Activated naive CD4-positive, alpha-beta T cell treated with anti-CD3 and anti-CD28 coated beads for 36 hours (primary cell): ENCODE measurements at regions of chr5 and their contacts with region 1.

Region 1: GRCh38 chr5:94524841-94525697 is 93.3 kb downstream of the KIAA0825 start:
- DNase-seq: peak; percentile 22
- H3K4me3 Mint-ChIP-seq: no peak overlapping the region
- H3K27ac Mint-ChIP-seq: no peak overlapping the region
- H3K4me1 Mint-ChIP-seq: no peaks in the 10 kb centered on the region
- H3K27me3 Mint-ChIP-seq: no peaks in the 10 kb centered on the region

Region 2: DNA sequence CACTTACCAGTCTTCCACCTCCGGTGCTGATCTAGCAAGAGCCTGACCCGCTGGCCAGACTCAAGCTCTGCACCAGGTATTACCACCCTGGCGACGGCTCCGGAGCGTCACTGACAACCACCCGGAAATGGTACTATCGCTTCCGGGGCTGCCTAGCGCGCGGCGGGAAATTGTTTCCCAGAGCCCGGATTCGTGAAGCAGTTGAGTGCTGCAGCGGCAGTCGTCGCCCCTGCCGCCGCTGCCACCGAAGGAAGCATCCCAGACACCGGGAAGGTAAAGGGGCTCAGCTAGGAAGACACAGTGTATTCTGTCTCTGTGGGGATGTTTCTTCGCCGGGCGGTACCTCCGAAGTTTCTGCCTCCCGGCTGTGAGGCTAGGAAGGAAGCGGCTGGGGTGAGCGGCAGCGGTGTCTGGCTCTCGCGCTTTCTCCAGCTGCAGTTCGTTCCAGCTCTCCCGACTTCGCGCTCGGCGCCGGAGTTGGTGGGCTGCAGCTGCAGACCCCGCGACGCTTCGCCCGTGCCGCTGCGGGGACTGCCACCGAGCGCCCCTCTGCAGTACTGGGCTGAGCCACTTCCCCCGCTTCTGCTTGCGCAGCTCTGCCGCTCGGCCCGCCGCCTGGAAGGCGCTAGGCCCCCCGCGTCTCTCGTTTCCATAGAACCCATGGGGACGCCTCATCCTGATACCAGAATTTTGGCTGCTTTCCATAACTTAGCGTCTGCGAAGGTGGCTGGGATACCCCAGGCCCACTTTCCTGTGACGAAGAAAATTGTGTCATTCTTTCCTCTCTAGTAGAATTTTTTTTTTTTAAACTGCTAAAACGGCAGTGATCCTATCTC is 93.6 kb after region 1 on chr5 and contains the starts of genes KIAA0825 and SLF1:
- CTCF ChIA-PET with region 1: interaction called, 3 read pairs
- intact Hi-C with region 1: loop called (anchors 2 kb)
- DNase-seq: peak; percentile 93
- H3K4me3 Mint-ChIP-seq: peak within 1 kb of the TSS; percentile 96
- H3K27ac Mint-ChIP-seq: peak within 1 kb of the TSS; percentile 93
- H3K4me1 Mint-ChIP-seq: peaks cover 34% of the 10 kb centered on the region
- H3K27me3 Mint-ChIP-seq: no peaks in the 10 kb centered on the region
- total RNA-seq, gene KIAA0825: 0.07 to 0.24 TPM
- total RNA-seq, gene SLF1: 12.4 to 12.8 TPM

Region 3: GRCh38 chr5:94693043-94693822 is 168.2 kb after region 1 on chr5:
- CTCF ChIA-PET with region 1: no interaction called
- intact Hi-C with region 1: loop called (anchors 1 kb)
- DNase-seq: no peak
- H3K4me3 Mint-ChIP-seq: no peak overlapping the region
- H3K27ac Mint-ChIP-seq: no peak overlapping the region
- H3K4me1 Mint-ChIP-seq: no peaks in the 10 kb centered on the region
- H3K27me3 Mint-ChIP-seq: no peaks in the 10 kb centered on the region

Region 4: GRCh38 chr5:94784536-94785510 is 259.8 kb after region 1 on chr5:
- CTCF ChIA-PET with region 1: no interaction called
- intact Hi-C with region 1: loop called (anchors 5 kb)
- DNase-seq: no peak
- H3K4me3 Mint-ChIP-seq: no peak overlapping the region
- H3K27ac Mint-ChIP-seq: no peak overlapping the region
- H3K4me1 Mint-ChIP-seq: no peaks in the 10 kb centered on the region
- H3K27me3 Mint-ChIP-seq: no peaks in the 10 kb centered on the region

Region 5: DNA sequence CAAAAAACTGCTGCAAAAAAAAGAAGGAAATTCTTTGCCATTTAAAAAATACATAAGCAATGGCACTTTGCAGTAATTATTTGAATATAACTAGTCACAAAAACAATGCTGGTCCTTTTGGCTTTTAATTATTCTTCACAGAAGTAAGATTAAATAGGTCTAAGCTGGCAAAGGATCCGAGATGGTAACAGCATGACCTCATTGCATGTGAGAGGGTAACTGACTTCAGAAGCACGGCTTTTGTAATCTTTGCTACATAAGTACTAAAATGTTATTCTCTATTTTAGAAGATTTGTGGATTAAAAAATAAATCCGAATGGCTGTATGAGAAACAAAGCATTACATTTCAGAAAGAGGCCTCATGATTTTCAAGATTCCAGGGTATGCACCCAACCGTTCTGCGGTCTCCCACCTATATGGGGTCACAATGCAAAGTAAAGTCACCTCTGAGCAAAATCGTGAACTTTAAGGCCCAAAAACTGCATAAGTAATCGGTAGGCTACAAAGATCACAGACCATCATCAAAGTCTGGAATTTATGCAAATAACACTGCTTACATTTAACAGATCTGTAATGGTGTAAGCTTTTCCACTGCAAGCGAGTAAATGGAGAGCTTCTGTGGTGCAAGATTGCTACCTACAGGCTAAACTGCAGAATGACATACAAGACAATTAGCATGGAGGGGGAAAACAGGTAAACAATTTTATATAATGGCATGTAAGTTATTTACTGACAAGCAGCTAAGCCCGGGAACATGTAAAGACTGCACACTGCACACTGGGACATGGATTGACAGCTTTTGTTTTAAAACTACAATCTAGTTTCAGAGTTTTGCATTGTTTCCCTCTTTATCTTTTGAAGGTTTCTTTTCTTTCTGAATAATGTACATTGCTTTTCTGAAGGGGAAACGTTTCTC is 325.0 kb after region 1 on chr5:
- CTCF ChIA-PET with region 1: interaction called, 4 read pairs
- intact Hi-C with region 1: loop called (anchors 1 kb)
- DNase-seq: peak; percentile 40
- H3K4me3 Mint-ChIP-seq: no peak overlapping the region
- H3K27ac Mint-ChIP-seq: no peak overlapping the region
- H3K4me1 Mint-ChIP-seq: peaks cover 3% of the 10 kb centered on the region
- H3K27me3 Mint-ChIP-seq: peaks cover 6% of the 10 kb centered on the region

Region 6: DNA sequence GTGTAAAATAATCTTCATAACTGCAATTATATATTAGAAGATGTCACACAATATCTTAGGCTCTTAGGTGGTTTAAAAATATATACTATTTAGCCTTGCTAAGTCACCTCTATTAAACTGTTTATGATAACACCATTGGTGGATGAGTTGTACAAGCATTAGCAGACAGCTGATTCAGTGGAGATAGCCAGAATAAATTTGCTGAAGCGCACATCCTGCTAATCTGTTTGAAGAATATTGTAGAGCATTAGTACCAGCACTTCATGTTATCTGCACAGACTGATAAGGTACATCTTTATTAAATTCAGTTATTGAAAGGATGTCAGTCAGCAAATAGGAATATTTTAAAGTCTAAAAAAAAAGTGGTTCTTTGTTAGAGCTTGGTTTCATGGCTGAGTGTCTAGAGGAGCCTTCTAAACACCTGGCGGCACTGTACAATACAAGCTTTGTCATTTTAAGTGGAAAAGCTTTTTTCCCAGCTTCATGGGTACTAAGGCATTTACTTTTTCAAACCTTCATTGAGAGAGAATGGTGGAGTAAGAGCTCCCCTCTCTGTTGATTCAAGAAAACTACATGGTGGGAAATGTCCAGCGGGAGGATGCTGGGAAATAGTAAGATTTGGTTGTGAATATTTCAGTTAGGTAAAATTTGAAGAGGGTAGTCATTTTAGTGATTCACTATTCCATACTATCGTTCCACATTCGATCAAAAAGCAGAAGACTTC is 368.5 kb after region 1 on chr5:
- CTCF ChIA-PET with region 1: no interaction called
- intact Hi-C with region 1: no loop called
- DNase-seq: no peak
- H3K4me3 Mint-ChIP-seq: no peak overlapping the region
- H3K27ac Mint-ChIP-seq: no peak overlapping the region
- H3K4me1 Mint-ChIP-seq: no peaks in the 10 kb centered on the region
- H3K27me3 Mint-ChIP-seq: peaks cover 4% of the 10 kb centered on the region

Region 7: GRCh38 chr5:94908889-94909480 is 383.9 kb after region 1 on chr5:
- CTCF ChIA-PET with region 1: interaction called, 3 read pairs
- intact Hi-C with region 1: loop called (anchors 5 kb)
- DNase-seq: peak; percentile 26
- H3K4me3 Mint-ChIP-seq: no peak overlapping the region
- H3K27ac Mint-ChIP-seq: no peak overlapping the region
- H3K4me1 Mint-ChIP-seq: no peaks in the 10 kb centered on the region
- H3K27me3 Mint-ChIP-seq: no peaks in the 10 kb centered on the region